GM10248 (cell line): ENCODE measurements at regions of chr2 and their contacts with region 1.

Region 1: GRCh38 chr2:240513549-240514287 is 44.1 kb downstream of the ANKMY1 start:
- DNase-seq: peak; percentile 94
- CTCF ChIP-seq: peak; percentile 94

Region 2: DNA sequence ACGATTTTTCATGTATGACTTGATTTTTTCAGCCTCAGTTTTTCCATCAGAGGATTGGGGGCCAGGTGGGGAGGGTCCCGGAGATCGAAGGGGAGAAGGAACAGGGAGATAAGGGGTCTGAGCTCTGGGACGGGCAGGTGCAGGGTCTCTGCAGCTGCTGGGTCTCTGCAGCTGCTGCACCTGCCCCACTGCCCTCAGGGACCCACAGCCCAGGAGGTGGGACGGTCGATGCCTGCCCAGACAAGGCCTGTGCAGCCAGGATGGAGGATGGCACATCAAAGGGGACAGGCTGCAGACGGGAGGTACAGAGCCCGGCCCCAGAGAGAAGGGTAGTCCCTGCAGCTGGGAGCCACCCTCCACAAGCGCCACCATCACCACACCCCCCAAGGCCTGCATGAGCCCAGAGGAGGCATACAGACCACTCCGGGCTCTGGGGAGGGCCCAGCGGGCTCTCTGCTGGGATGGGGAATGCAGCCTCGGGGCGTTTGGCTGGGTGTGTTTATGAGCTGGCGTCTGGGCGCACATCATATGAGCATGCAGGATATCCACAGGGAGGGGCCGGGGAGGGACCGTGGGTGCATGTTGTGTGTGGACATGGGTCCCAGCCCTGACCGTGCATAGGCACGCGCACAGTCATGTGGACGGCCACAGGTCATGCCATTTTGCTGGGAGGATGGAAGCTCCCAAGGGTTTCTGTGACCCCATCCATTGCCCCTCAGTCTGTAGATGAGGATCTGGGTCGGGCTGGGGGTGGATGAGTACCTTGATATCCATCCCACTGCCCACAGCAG is 113.2 kb before region 1 on chr2:
- CTCF ChIA-PET with region 1: no interaction called
- POLR2A ChIA-PET with region 1: no interaction called
- DNase-seq: no peak
- CTCF ChIP-seq: no peak

Region 3: DNA sequence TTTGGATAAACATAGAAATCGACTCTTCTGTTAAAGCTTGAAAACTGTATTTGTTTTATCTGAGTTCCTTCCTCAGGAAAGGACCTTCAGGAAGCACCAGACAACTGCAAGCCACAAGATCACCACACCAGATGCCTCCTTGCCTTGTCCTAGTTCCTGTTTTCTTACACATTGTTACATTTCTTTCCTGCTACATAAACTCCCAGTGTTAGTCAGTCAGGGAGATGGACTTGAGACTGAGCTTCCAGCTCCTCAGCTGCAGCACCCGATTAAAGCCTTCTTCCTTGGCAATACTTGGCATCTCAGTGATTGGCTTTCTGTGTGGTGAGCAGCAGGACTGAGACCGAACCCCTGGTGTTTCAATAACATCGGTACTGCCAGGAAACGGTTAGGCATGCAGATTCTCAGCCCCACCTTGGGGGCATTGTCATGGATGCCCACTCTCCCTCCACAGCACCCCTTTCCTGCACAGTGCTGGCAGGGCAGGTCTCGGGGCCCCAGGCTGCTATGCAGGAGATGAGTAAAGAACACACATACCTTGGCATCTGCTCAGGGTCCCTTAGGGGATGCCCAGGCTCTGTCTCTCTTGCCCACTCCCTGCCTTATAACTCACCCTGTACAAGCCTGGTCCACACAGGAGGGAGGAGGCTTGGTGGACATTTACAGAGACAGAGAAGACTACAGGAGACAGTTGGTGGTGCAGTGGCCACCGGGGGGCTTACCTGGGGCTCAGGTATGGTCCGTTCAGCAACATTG is 11.4 kb after region 1 on chr2:
- CTCF ChIA-PET with region 1: interaction called, 14 read pairs
- POLR2A ChIA-PET with region 1: no interaction called
- DNase-seq: no peak
- CTCF ChIP-seq: no peak

Region 4: GRCh38 chr2:240551809-240552208 is 38.1 kb after region 1 on chr2:
- CTCF ChIA-PET with region 1: interaction called, 14 read pairs
- POLR2A ChIA-PET with region 1: no interaction called
- DNase-seq: no peak
- CTCF ChIP-seq: no peak

Region 5: DNA sequence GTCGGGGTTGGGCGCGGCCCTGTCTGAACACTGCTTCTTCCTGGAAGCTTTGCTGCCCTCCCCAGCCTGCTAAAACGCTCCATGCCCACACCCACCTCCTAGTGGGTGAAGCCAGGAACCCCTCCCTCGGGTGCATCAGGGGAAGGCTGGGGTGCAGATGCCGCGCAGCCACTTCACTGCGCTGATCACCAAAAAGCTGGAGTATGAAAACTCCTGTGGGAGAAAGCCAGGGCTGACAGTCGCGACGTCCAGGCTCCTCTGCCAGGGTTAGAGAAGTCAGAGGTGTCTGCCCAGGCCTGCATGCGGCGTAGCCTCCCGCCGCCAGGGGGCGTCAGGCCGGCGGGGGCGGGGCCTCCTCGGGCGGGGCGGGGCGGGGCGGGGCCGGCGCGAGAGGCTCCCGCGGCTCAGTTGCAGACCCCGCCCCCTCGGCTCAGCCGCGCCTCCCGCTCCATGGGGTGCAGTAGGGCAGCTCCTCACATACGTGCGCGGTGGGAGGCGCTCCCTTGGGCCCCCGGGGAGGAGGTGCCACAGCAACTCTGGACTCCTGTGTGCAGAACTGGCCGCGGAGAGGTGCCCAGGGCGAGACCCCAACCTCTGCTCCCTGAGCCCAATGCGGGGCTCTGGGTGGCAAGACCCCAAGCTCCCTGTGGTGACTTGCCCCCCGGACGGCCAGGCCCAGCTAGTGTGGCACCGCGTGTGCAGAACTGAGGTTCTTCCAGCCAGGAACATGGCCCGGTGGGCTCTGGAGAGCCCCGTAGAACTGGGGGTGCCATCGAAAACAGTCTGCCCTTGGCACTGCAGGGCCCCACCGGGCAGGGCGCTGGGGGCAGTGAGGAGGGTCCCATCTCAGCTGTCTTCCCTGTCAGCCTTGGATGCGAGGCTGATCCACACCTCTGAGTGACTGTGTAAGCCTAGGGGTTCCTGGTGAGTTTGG is 52.8 kb after region 1 on chr2:
- CTCF ChIA-PET with region 1: interaction called, 27 read pairs
- POLR2A ChIA-PET with region 1: no interaction called
- DNase-seq: peak; percentile 92
- CTCF ChIP-seq: peak; percentile 76

Region 6: DNA sequence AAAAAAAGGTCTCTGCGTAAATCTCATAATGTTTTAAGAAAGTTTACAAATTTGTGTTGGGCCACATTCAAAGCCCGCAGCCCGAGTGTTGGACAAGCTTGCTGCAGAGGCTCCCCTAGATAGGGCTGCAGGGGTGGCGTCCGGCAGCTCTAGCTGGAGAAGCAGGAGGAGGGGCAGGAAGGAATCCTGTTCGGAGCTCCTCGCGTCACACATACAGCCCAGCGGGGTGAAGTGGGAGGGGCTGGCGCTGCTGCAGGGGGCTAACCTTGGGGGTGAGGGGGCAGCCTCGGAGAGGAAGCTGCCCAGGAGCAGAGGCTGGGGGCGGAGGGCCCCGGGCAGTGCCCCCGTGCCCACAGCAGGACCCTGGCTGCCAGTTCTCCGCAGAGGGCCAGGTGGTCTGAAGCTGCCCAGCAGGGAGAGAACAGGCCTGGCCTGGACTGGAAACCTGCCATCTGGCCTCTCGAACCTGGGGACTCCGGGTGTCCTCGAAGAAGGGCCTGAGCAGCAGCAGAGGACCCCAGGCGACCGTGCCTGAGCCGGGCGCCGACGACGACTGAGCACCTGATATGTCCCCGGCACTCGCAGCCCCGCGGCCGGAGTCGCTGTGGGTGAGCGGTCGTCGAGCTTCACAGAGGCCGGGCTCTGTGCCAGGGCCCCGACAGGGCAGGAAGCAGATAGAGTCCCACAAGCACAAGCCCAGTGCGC is 109.0 kb after region 1 on chr2:
- CTCF ChIA-PET with region 1: interaction called, 11 read pairs
- POLR2A ChIA-PET with region 1: no interaction called
- DNase-seq: no peak
- CTCF ChIP-seq: no peak

Region 7: DNA sequence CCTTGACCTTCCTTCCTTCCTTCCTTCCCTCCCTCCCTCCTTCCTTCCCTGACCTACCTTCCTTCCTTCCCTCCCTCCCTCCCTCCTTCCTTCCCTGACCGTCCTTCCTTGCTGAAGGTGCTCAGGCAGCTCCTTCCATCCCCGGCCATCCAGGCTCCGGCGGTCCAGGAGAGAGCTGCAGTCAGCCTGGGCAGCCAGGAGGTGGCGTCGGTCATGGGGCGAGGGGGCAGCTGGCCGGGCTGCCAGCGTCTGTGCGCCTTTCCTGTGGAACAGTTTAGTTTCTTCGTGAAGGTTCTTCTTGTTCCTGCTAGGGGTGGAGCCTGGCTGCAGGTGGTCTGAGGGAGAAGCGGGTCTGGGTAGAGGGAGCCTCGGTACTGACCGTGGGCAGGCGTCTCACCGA is 127.2 kb after region 1 on chr2:
- CTCF ChIA-PET with region 1: no interaction called
- POLR2A ChIA-PET with region 1: no interaction called
- DNase-seq: no peak
- CTCF ChIP-seq: no peak

Region 8: DNA sequence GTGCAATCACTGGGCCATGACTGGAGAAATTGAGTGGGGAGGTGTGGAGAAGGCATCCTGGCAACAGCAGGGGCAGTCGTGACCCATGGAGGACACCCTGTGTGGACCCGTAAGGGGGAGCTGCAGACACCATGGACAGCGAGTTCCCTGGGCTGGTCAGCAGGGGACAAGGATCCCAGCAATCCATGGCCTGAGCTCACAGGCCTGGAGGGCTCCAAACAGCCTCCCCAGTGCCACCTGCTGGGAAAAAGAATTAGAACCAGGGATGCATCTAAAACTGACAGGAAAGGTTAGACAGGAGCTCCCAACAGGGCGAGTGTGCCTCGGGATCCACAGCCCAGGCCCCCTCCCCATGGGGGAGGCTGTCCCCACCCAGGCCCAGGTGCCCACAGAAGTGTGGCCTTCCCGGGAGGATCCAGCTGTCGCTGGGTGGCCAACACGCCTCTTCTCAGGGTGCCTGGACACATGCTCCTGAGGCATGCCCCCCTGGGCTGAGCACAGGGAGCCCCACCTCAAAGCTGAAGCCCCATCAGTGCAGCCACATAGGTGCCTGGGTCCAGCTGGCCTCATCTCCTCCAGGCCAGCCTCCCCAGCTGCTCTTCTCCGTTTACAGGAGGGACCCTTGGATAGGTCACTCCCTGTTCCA is 326.8 kb after region 1 on chr2:
- CTCF ChIA-PET with region 1: interaction called, 18 read pairs
- POLR2A ChIA-PET with region 1: no interaction called
- DNase-seq: peak; percentile 62
- CTCF ChIP-seq: peak; percentile 54